ENCODE measurements at regions of chr5 and their contacts with region 1.

Region 1: GRCh38 chr5:81851481-81852178 is 100.7 kb upstream of the SSBP2 start:
- DNase-seq: peak; percentile 96 to 99 (median 99)
- ATAC-seq: peak; percentile 95 to 96
- H3K4me3 ChIP-seq: peak overlapping the region; percentile 90
- H3K27ac ChIP-seq: peak overlapping the region; percentile 83
- H3K4me1 ChIP-seq: peaks cover 15% of the 10 kb centered on the region
- H3K27me3 ChIP-seq: no peaks in the 10 kb centered on the region

Region 2: DNA sequence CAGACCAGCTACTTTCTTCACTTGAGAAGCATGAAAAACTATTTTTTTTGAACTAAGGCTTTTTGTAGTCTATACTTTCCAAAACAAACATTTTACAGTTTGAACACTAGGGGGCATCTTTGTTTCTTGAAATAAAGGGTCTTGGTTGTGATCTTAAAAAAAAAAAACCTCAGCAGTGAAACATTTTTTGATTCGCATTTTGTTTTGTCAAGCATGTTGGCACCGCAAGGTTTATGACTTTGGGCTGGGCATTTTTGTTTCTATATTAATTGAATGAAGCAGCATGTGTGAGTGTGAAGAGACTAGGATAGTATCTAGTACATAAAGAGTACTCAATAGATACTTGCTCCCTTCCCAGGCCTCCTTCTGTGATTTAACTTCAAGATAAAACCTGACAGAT is 426.1 kb before region 1 on chr5:
- intact Hi-C with region 1: loop called in 1 of 4 experiments (anchors 10 kb)
- DNase-seq: no peak
- ATAC-seq: peak; percentile 56 to 67
- H3K4me3 ChIP-seq: no peak overlapping the region
- H3K27ac ChIP-seq: no peak overlapping the region
- H3K4me1 ChIP-seq: no peaks in the 10 kb centered on the region
- H3K27me3 ChIP-seq: no peaks in the 10 kb centered on the region

Region 3: GRCh38 chr5:81513982-81514381 is 337.6 kb before region 1 on chr5:
- intact Hi-C with region 1: loop called in 1 of 4 experiments (anchors 10 kb)
- DNase-seq: no peak
- ATAC-seq: no peak
- H3K4me3 ChIP-seq: no peak overlapping the region
- H3K27ac ChIP-seq: no peak overlapping the region
- H3K4me1 ChIP-seq: no peaks in the 10 kb centered on the region
- H3K27me3 ChIP-seq: no peaks in the 10 kb centered on the region

Region 4: DNA sequence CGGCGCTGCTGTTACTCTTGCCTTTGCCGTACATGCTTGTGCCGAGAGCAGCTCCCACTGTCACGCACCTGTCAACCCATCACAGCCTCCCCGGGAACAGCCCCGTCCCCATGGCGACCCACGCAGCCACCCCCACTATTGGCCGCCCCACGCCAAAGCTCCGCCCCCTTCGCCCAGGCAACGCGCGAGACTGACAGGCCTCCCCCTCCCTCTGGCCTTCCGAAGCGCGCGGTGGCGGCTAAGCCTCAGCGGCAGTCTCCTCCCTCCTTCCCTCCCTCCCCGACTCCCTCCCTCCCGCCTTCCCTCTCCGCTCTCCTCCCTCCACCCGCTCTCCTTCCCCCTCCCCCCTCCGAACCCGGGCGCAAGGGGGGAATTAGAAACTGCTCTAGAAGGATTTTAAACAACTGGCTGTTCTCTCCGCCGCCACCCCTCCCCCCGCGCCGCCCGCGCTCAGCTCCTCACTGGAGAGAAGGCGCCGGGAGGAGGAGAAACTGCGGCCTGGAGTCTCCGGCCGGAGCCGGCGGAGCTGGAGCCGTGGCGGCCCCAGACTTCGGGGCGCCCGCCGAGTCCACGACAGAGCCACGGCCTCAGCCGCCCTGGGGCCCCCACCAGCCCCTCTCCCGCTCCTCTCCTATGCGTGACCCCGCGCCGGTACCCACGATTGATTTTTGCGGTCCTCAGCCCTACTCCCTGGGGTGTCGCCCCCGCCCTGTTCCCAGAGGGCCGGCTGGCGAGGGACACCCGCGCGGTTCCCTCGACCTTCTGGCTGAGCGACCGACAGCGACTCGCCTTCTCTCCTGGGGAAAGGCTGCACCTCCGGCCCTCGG is 100.4 kb before region 1 on chr5 and contains the start of gene SSBP2:
- intact Hi-C with region 1: loop called (anchors 1 to 2 kb)
- DNase-seq: peak; percentile 99 to 100 (median 99)
- ATAC-seq: peak; percentile 98
- H3K4me3 ChIP-seq: peak within 1 kb of the TSS; percentile 91
- H3K27ac ChIP-seq: peak within 1 kb of the TSS; percentile 99
- H3K4me1 ChIP-seq: peaks cover 2% of the 10 kb centered on the region
- H3K27me3 ChIP-seq: no peaks in the 10 kb centered on the region
- total RNA-seq, gene SSBP2: 50.6 to 57.8 (median 54.1) TPM

Region 5: GRCh38 chr5:81787474-81788242 is 64.0 kb before region 1 on chr5:
- intact Hi-C with region 1: loop called in 3 of 4 experiments (anchors 2 to 5 kb)
- DNase-seq: peak in 2 of 3 donors; percentile 48 to 71
- ATAC-seq: peak; percentile 70 to 71
- H3K4me3 ChIP-seq: peak overlapping the region; percentile 34
- H3K27ac ChIP-seq: peak overlapping the region; percentile 56
- H3K4me1 ChIP-seq: peaks cover 2% of the 10 kb centered on the region
- H3K27me3 ChIP-seq: no peaks in the 10 kb centered on the region

Region 6: GRCh38 chr5:81971712-81972495 is 120.3 kb after region 1 on chr5 and contains the start of gene ATG10:
- intact Hi-C with region 1: loop called in 2 of 4 experiments (anchors 5 kb)
- DNase-seq: peak; percentile 93 to 98 (median 97)
- ATAC-seq: peak; percentile 100
- H3K4me3 ChIP-seq: peak within 1 kb of the TSS; percentile 50
- H3K27ac ChIP-seq: peak within 1 kb of the TSS; percentile 92
- H3K4me1 ChIP-seq: no peaks in the 10 kb centered on the region
- H3K27me3 ChIP-seq: no peaks in the 10 kb centered on the region
- total RNA-seq, gene ATG10: 4.8 to 7.6 (median 5.2) TPM

Region 7: DNA sequence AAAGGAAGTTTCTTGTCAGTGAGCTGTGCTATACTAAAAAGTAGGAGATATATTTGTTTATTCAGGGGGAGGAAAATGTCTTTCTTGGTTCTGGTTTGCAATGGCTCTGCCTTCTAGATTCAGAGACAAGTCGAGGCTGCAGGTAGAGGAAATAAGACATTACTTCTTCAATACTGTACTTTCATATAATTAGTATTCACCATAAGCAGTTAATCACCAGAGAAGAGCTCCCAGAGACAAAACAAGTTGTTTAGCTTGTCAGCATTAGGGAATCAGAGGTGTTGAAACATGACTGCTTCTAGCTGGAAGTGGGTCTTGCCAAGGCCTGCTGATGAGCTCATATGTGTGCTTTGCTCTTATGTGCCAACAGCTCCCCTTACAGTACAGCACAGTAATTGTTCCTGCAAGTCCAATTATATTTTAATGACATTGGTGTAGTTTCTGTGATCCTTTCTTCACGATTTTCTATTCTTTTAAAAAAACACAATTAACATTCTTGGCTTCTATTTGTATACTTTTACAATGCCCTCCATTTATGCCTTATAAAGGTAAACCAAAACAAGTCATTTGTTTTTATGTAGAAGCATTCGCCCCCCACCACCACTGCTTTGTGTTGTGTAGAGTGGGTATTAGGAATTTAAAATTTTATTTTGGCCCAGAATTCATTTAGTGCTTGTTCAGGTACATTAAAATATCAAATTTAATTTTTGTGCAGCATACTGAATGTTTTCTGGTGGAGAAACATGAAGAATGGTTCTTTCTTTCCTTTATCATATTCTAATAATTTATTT is 314.3 kb after region 1 on chr5:
- intact Hi-C with region 1: loop called in 2 of 4 experiments (anchors 10 kb)
- DNase-seq: peak; percentile 69 to 84 (median 73)
- ATAC-seq: peak; percentile 99 to 100
- H3K4me3 ChIP-seq: no peak overlapping the region
- H3K27ac ChIP-seq: no peak overlapping the region
- H3K4me1 ChIP-seq: peaks cover 3% of the 10 kb centered on the region
- H3K27me3 ChIP-seq: no peaks in the 10 kb centered on the region

Measured in right cardiac atrium (tissue), 5 donors.